Sciatic nerve (tissue), 2 donors: ENCODE measurements at regions of chr21 and their contacts with region 1.

Region 1: DNA sequence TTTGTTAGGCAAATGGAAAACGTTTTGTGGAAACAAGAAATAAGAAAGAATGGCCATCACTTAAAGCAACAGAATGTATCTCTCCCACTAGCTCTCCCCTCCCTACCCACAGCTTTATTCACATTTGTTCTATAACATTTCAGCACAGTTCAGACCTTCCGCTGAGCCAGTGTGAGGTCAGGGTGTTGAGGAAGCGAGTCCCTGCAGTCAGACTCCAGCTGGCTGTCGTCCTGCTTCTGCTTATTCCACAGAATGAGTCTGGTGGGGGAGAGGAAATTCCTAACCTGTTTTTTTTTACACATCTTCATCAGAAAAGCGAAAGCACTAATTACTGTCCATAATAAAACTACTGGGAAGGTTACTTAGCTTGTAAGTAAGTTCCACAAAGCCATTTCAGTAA is 39.0 kb downstream of the MRPL39 start:
- DNase-seq: peak; percentile 61
- ATAC-seq: peak; percentile 76

Region 2: GRCh38 chr21:24339406-24339805 is 1228.8 kb before region 1 on chr21:
- intact Hi-C with region 1: loop called (anchors 5 kb)
- DNase-seq: no peak
- ATAC-seq: no peak